K562 (cell line): ENCODE measurements at regions of chr11 and their contacts with region 1.

Region 1: GRCh38 chr11:82906244-82906654 is 4.7 kb downstream of the DDIAS start:
- DNase-seq: peak in 1 of 4 experiments; percentile 12
- ATAC-seq: no peak
- H3K4me3 ChIP-seq: no peak overlapping the region
- H3K27ac ChIP-seq: no peak overlapping the region
- H3K4me1 ChIP-seq: peaks cover under 1 to 17% of the 10 kb centered on the region in 2 experiments; a peak in 3 of 5 replicates
- H3K27me3 ChIP-seq: no peaks in the 10 kb centered on the region
- CTCF ChIP-seq: peak in 1 of 3 experiments; percentile 59; a peak in 3 of 6 replicates
- EP300 ChIP-seq: no peak
- POLR2A ChIP-seq: no peak
- RAD21 ChIP-seq: peak; percentile 72 to 82

Region 2: DNA sequence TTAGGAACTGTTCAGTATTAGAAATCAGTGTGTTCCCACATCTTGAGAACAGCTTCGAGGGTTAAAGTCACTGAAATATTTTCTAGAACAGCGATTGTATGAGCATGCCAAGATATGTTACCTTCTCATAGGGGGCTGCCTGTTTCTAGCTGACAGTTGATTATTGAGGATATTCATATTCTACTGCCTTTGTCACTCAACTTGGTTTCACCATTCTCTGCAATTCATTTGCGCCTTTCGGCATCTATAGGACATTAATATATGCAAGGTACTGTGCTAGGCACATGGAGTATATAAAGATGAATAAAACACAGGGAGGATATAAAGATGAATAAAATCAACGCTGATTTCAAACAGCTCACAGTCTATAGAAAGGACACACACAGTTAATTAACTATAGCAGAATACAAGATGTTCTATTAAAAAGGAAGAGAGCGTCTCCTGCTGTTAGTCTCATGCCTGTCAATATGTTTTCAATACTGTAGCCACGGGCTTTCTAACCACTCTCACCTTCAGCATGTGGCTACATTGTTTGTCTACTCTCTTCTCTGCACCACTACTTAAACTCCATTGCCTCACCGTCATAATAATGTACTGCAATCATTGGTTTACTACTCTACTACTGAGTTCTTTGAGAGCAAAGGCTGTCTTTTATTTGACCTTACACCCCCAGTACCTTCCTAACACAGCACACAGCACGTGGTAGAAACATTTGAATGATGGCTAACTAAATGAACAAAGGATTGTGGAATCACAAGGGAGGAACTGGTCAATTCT is 83.6 kb after region 1 on chr11:
- CTCF ChIA-PET with region 1: no interaction called
- POLR2A ChIA-PET with region 1: no interaction called
- in situ Hi-C with region 1: no loop called
- intact Hi-C with region 1: loop called (anchors 5 kb)
- DNase-seq: no peak
- ATAC-seq: peak; percentile 18; the same call in 1 of the 3 replicates
- H3K4me3 ChIP-seq: no peak overlapping the region
- H3K27ac ChIP-seq: no peak overlapping the region
- H3K4me1 ChIP-seq: peaks cover 2 to 25% of the 10 kb centered on the region in 2 experiments; a peak in 3 of 5 replicates
- H3K27me3 ChIP-seq: no peaks in the 10 kb centered on the region
- CTCF ChIP-seq: peak in 1 of 3 experiments; percentile 32; a peak in 2 of 6 replicates
- EP300 ChIP-seq: no peak
- POLR2A ChIP-seq: no peak
- RAD21 ChIP-seq: 0 out of 4 replicates have a peak, but pooled peaks have one; percentile 8 to 28

Region 3: GRCh38 chr11:83007909-83008580 is 101.8 kb after region 1 on chr11:
- CTCF ChIA-PET with region 1: no interaction called
- POLR2A ChIA-PET with region 1: no interaction called
- in situ Hi-C with region 1: no loop called
- intact Hi-C with region 1: loop called (anchors 5 kb)
- DNase-seq: peak; percentile 62 to 95 (median 79)
- ATAC-seq: peak; percentile 97
- H3K4me3 ChIP-seq: no peak overlapping the region
- H3K27ac ChIP-seq: peak overlapping the region; percentile 60
- H3K4me1 ChIP-seq: peaks cover 13 to 27% of the 10 kb centered on the region in 2 experiments; a peak in 4 of 5 replicates
- H3K27me3 ChIP-seq: no peaks in the 10 kb centered on the region
- CTCF ChIP-seq: peak in 2 of 3 experiments; percentile 8 to 40; a peak in 2 of 6 replicates
- EP300 ChIP-seq: peak; percentile 88
- POLR2A ChIP-seq: 0 out of 2 replicates have a peak, but pooled peaks have one; percentile 33
- RAD21 ChIP-seq: peak in 1 of 2 experiments; percentile 49; a peak in 3 of 4 replicates

Region 4: GRCh38 chr11:83033972-83034672 is 127.9 kb after region 1 on chr11:
- CTCF ChIA-PET with region 1: no interaction called
- POLR2A ChIA-PET with region 1: no interaction called
- in situ Hi-C with region 1: no loop called
- intact Hi-C with region 1: no loop called
- DNase-seq: peak in 1 of 4 experiments; percentile 47
- ATAC-seq: peak; percentile 78
- H3K4me3 ChIP-seq: no peak overlapping the region
- H3K27ac ChIP-seq: no peak overlapping the region
- H3K4me1 ChIP-seq: peaks cover 4 to 7% of the 10 kb centered on the region in 2 experiments; a peak in 3 of 5 replicates
- H3K27me3 ChIP-seq: no peaks in the 10 kb centered on the region; a peak in 1 of 5 replicates
- CTCF ChIP-seq: no peak
- EP300 ChIP-seq: peak; percentile 23; the same call in 1 of the 2 replicates
- POLR2A ChIP-seq: no peak
- RAD21 ChIP-seq: no peak

Region 5: GRCh38 chr11:83071567-83072349 is 165.5 kb after region 1 on chr11 and contains the start of gene RAB30:
- CTCF ChIA-PET with region 1: no interaction called
- POLR2A ChIA-PET with region 1: interaction called, 4 read pairs
- in situ Hi-C with region 1: no loop called
- intact Hi-C with region 1: loop called (anchors 1 kb)
- DNase-seq: peak; percentile 91 to 99 (median 94)
- ATAC-seq: peak; percentile 97
- H3K4me3 ChIP-seq: peak within 1 kb of the TSS; percentile 68
- H3K27ac ChIP-seq: peak within 1 kb of the TSS; percentile 86
- H3K4me1 ChIP-seq: peaks cover 12% of the 10 kb centered on the region in 2 experiments; a peak in 2 of 5 replicates
- H3K27me3 ChIP-seq: no peaks in the 10 kb centered on the region
- CTCF ChIP-seq: no peak; a peak in 1 of 6 replicates
- EP300 ChIP-seq: peak; percentile 23; the same call in 1 of the 2 replicates
- POLR2A ChIP-seq: peak; percentile 97
- RAD21 ChIP-seq: peak; percentile 11 to 38; a peak in 3 of 4 replicates
- polyA plus RNA-seq, gene RAB30: 0.68 to 1.0 TPM

Region 6: DNA sequence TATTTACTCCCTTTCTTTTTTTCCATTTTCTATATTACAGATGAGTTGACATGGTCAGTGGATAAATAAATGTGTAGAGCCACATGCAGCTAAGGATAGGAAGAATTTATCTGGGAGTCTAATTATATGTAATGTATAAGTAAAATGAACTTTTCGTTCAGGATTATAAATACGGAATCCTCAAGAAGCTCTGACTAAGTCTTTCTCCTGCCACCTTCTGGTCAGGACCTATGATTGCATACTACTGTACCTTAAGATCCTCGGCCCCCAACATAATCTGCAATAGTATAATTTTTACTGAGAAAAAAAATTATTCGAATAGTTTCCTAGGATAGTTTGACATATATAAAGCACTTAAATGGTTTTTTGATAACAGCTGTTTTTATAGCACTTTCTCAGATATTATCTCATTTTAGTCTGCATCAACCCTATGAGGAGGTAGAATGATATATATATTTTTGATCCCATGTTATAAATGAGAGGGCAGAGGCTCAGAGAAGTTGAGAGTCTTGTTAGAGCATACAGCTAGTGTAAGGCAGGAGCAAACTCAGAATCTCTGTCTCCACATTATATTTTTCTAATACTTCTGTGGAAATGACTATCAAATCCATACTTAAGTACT is 343.8 kb after region 1 on chr11:
- CTCF ChIA-PET with region 1: interaction called, 7 read pairs
- POLR2A ChIA-PET with region 1: no interaction called
- in situ Hi-C with region 1: loop called (anchors 25 kb)
- intact Hi-C with region 1: loop called (anchors 1 kb)
- DNase-seq: peak; percentile 47 to 61 (median 50)
- ATAC-seq: peak; percentile 92
- H3K4me3 ChIP-seq: no peak overlapping the region
- H3K27ac ChIP-seq: no peak overlapping the region
- H3K4me1 ChIP-seq: no peaks in the 10 kb centered on the region
- H3K27me3 ChIP-seq: no peaks in the 10 kb centered on the region
- CTCF ChIP-seq: peak; percentile 46 to 77 (median 55); a peak in 5 of 6 replicates
- EP300 ChIP-seq: no peak
- POLR2A ChIP-seq: no peak
- RAD21 ChIP-seq: peak; percentile 73 to 81